ENCODE measurements at regions of chr12 and their contacts with region 1.

Region 1: GRCh38 chr12:69879041-69879960 is 54.3 kb downstream of the MYRFL start:
- DNase-seq: peak; percentile 89

Region 2: GRCh38 chr12:70185301-70185700 is 306.0 kb after region 1 on chr12:
- intact Hi-C with region 1: no loop called
- DNase-seq: no peak

Region 3: DNA sequence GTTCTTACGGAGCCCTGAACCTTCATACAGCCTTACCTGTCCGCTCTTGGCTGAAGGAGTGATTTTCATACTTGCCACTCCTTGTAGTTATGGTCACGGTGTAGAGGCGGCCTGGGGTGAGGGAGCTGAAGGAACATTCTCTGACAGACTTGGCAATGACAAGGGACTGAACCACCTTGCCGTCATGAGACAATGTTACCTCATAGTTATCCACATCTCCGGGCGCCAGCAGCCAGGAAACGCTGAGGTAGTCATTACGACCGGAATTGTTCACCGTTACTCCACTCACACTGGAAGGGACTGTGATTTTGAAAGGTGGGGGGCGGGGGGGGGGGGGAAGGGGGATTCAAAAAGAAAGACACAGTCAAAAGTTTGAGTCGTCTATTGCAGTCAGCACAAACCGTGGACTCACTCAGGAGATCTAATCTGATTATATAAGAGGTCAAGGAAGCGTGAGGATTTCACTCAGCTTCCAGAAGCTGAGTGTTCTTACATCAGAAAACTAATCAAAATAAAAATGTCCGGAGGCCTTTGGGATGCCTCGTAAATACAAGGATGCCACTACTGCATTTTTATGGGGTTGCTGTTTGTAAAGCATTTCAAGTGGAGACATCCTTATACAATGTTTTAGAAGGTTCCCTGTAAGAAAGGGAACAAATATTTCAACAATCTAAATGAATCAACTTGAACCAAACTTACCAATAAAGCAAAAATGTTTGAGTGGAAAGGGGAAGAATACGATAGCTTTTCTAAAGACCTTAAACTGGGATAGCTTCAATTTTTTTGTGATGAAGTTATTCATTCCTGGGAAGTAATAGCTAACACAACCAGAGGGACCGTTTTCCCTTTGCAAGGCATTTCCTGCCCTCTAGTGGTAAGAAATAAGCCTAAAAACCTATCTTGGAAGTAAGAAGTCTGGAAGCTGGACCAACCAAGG is 697.3 kb after region 1 on chr12:
- intact Hi-C with region 1: loop called in 1 of 2 experiments (anchors 5 kb)
- DNase-seq: no peak

Region 4: DNA sequence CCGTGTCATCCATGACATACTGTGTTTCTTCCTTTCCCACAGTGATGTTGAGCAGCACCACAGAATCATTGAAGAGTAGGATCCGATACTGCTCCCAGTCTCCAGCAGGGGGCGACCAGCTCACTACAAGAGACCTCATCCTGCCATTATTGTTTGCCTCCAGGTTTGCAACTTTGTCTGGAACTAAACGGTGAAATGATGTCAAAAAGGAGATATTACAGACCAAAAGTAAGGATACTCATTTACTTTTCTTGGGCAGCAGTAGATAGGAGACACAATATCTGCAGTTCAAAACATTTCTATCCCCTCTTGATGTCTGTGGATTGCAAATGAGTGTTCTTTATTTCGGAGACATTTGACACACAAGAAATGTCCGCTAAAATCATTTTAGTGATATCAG is 710.8 kb after region 1 on chr12:
- intact Hi-C with region 1: loop called in 1 of 2 experiments (anchors 5 kb)
- DNase-seq: peak; percentile 92

Region 5: DNA sequence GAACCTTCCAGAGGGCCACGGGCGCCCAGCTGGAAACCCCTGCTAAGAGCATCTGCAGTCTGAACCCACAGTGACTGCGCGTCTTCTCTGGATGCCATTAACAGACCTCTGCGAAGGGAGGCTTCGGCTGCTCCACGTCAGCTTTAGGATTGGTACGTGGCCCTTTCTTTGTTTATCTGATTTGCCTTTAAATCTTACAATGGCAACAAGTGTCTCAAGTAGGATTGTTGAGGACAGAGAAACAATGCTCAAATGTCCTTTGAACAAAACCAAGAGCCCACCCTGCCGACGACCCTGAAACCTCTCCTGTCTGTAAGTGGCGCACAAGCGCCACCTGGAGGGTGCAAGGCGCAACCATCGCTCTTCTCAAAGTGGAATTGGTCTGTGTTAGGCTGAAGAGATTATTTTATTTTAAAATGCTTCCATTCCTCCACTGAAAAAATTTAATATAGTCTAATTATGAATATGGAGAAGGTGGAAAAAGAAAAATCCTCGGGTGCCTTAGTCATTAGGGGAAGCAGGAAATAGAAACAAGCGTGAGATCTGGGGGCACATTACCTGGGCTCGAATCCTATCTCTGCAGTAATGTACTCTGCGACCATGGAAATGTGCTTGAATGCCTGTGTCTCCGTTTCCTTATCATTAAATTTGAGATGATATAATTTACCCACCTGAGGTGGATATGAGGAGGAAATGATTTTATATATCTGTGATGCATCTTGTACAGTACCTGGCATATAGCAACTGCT is 840.5 kb after region 1 on chr12:
- intact Hi-C with region 1: loop called in 1 of 2 experiments (anchors 10 kb)
- DNase-seq: peak; percentile 83